HepG2 (cell line): ENCODE measurements at regions of chr13 and their contacts with region 1.

Region 1: DNA sequence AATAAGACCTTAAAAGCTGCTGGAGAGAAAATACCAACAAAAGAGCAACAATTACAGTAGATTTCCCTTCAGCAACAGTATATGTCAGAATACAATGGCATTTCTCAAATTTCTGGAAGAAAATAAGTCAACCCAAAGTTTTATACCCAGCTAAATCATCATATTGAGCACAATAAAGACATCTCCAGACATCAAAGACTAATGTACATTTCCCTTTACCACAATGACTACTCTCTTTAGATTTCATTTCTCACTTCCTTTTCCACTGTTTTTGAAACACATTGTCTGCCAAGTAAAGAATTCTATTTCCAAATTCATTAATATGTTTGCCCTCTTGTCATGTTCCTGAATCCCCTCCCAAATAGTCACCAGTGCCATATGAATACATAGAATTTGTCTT is 111.4 kb downstream of the POU4F1 start:
- DNase-seq: no peak
- ATAC-seq: no peak
- H3K4me3 ChIP-seq: no peak overlapping the region
- H3K27ac ChIP-seq: no peak overlapping the region
- H3K4me1 ChIP-seq: no peaks in the 10 kb centered on the region
- H3K27me3 ChIP-seq: no peaks in the 10 kb centered on the region
- CTCF ChIP-seq: no peak
- EP300 ChIP-seq: no peak
- POLR2A ChIP-seq: no peak
- RAD21 ChIP-seq: no peak

Region 2: GRCh38 chr13:78420814-78421213 is 71.2 kb before region 1 on chr13:
- CTCF ChIA-PET with region 1: no interaction called
- POLR2A ChIA-PET with region 1: no interaction called
- in situ Hi-C with region 1: no loop called
- intact Hi-C with region 1: loop called (anchors 2 kb)
- DNase-seq: no peak
- ATAC-seq: no peak
- H3K4me3 ChIP-seq: no peak overlapping the region
- H3K27ac ChIP-seq: no peak overlapping the region
- H3K4me1 ChIP-seq: no peaks in the 10 kb centered on the region
- H3K27me3 ChIP-seq: no peaks in the 10 kb centered on the region
- CTCF ChIP-seq: no peak
- EP300 ChIP-seq: no peak
- POLR2A ChIP-seq: no peak
- RAD21 ChIP-seq: no peak

Region 3: DNA sequence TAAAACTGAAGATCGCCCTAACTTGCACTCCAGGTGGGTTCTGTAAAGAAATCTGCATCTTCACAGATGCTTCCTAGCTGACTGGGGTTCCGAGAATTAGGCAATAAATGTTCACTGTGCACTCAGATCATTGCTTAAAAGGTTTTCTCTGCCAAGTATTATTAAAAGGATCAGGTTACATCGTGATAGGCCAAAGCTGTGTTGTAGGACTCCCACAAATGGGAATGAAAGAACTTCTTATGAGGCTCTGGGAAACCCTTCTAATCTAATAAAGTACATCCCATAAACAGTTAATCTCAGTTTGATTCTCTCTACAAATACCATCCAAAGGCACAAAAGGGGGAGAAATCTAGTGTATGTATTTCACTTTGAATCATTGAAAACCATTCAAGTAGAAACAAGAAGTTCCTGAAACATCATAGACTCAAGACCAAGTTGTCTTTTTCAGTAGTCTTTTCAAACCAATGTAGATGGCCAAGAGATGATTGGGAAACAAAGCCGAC is 118.5 kb after region 1 on chr13:
- CTCF ChIA-PET with region 1: no interaction called
- POLR2A ChIA-PET with region 1: no interaction called
- in situ Hi-C with region 1: no loop called
- intact Hi-C with region 1: no loop called
- DNase-seq: no peak
- ATAC-seq: no peak
- H3K4me3 ChIP-seq: no peak overlapping the region
- H3K27ac ChIP-seq: no peak overlapping the region
- H3K4me1 ChIP-seq: peaks cover 18% of the 10 kb centered on the region; the same call in 1 of the 2 replicates
- H3K27me3 ChIP-seq: peaks cover 3 to 50% of the 10 kb centered on the region in 2 experiments
- CTCF ChIP-seq: no peak
- EP300 ChIP-seq: no peak
- POLR2A ChIP-seq: no peak
- RAD21 ChIP-seq: no peak